Aorta (tissue), 5 donors: ENCODE measurements at regions of chr9 and their contacts with region 1.

Region 1: DNA sequence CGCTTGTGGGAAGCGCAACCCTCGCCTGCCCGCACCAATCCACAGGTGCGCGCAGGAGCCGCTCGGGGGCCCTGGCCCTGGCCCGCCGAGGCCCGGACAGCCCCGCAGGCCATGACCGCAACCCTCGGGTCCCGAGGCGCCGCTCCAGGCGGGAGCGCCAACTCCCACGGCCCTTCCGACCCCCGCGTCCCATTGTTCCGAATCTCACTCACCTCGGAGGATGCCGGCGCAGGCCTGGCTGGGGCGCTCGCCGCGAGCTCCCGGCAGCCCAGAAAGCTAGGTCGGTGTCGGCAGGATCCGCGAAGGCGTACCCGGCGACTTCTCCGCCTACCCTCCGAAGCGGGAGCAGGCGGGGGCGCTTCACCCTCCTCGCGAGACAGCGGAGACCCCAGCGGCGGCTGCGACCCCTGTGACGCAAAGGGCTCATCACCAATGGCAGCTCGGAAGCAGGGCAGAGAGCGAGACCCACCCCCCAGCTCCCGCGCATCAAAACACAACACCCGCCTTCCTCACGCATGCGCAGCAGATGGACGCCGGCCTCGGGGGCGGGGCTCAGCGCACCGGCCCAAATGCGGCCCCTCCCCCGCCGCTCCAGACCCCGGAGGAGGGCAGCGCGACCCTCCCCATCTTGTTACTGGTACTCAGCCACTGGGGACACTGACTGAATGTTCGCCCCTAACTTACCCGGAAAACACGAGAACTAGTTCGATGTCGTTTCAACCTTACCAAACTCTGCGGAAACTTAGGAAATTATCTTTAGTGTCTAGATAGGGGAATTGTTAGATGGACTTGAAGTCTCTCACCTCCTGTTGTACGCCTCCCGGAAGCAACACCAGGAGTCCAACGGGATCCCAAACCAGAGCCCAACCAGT is 1.3 kb upstream of the SMIM27 start:
- DNase-seq: peak; percentile 95 to 97
- ATAC-seq: peak; percentile 94
- H3K4me3 ChIP-seq: peak overlapping the region; percentile 66 to 85
- H3K27ac ChIP-seq: peak overlapping the region; percentile 78 to 90
- H3K4me1 ChIP-seq: no peaks in the 10 kb centered on the region
- H3K27me3 ChIP-seq: no peaks in the 10 kb centered on the region

Region 2: GRCh38 chr9:32526041-32526706 is 24.6 kb before region 1 on chr9 and contains the start of gene RIGI:
- intact Hi-C with region 1: loop called in 1 of 2 experiments (anchors 2 kb)
- DNase-seq: peak; percentile 97 to 98
- ATAC-seq: peak; percentile 95
- H3K4me3 ChIP-seq: peak within 1 kb of the TSS; percentile 78 to 99
- H3K27ac ChIP-seq: peak within 1 kb of the TSS in 1 of 2 donors; percentile 88
- H3K4me1 ChIP-seq: peaks cover 2 to 4% of the 10 kb centered on the region in 2 donors
- H3K27me3 ChIP-seq: no peaks in the 10 kb centered on the region
- total RNA-seq, gene RIGI: 13.0 to 15.6 TPM

Region 3: DNA sequence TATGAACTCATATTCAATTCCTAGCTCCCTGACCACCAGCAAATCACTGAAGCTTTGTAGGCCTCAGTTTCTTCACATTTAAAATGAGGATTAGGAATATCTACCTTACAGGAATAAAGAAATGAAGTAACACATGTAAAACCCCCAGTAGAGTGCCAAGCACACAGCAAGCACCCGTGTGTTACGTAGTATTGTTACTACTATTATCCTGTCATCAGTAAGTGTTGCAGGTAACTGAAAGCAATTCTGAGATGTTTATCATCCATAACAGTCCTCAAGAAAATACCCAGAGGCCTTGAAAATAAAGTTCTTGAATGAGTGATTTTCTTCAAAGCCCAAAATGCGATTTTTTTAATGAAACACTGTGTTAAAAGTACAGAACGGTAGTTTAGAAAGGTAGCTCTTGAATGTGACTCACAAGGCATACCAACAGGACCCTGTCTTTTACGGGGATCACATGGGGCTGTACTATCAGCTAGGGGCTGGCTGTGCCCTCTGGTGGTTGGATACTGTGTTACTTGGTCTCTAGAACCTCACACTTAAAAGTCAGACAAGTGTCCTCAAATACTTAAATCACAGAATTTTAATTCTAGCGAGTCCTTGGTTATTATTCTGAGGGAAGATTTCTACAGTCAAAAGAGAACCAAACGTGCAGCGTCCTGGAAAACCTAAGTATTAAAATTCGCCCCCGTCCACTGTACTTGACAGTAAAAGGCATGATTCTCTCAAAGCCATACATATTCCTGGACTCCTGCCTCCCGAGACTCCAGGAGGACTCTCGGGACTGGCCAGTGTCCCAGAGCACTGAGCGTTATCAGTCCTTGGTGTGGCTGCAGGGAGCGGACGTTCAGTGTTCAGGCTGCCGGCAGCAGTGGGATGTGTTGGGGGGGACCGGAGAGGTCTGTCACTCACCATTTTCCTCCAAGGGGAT is 21.4 kb after region 1 on chr9:
- intact Hi-C with region 1: loop called in 1 of 2 experiments (anchors 2 kb)
- DNase-seq: peak in 1 of 2 donors; percentile 60
- ATAC-seq: peak; percentile 86
- H3K4me3 ChIP-seq: peak overlapping the region; percentile 34 to 92
- H3K27ac ChIP-seq: peak overlapping the region; percentile 59 to 68
- H3K4me1 ChIP-seq: no peaks in the 10 kb centered on the region
- H3K27me3 ChIP-seq: no peaks in the 10 kb centered on the region